PC-3 (cell line): ENCODE measurements at regions of chr2 and their contacts with region 1.

Region 1: DNA sequence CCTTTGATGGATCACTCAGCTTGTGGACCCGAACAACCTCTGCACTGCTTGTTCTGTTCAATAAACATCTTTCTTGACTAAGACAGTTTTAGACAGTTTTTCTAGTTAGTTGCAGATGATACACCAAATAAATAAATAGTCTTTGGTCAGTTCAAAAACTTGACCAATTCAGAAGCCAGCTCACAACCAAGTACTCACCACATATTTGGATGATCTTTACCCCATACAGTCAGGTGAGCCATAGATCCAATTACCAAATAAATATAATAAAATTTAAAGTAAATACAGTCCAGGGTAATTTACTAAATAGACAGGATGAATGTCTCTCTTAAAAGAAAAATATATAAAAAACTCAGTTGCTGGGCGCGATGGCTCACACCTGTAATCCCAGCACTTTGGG is 18.2 kb downstream of the SCN3A start:
- DNase-seq: peak; percentile 52
- ATAC-seq: peak; percentile 95
- H3K4me3 ChIP-seq: no peak overlapping the region
- H3K27ac ChIP-seq: no peak overlapping the region
- H3K4me1 ChIP-seq: no peaks in the 10 kb centered on the region
- H3K27me3 ChIP-seq: peaks cover 15% of the 10 kb centered on the region; the same call in 1 of the 2 replicates
- CTCF ChIP-seq: no peak

Region 2: DNA sequence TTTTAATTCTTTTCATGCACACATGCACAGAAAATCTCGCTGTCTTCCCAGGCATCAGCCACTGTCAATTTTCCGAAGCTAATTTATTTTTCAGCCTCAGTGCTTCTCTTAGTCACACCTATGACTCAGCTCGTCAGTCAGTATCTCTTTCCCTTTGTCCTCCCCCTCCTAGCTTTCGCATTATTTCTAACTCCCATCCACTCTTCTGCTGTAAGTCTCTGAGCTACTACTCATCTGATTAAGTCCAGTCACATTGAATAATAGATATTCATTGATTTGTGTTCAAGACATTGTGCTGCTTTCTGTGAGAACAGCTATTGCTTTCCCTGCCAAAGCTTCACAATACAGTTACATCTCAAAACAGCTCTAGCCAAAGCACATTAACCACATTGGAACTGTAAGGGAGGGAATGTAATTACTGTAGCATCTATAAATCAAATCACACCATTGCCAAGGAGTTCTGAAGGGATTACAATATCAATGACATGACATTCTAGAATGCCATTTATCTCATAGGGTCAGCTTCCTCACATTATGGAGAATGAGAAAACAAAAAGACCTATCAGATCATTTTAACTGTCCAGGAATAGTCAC is 71.2 kb before region 1 on chr2:
- CTCF ChIA-PET with region 1: no interaction called
- POLR2A ChIA-PET with region 1: no interaction called
- intact Hi-C with region 1: no loop called
- DNase-seq: peak; percentile 71
- ATAC-seq: peak; percentile 95
- H3K4me3 ChIP-seq: no peak overlapping the region
- H3K27ac ChIP-seq: no peak overlapping the region
- H3K4me1 ChIP-seq: peaks cover 7% of the 10 kb centered on the region
- H3K27me3 ChIP-seq: no peaks in the 10 kb centered on the region
- CTCF ChIP-seq: no peak

Region 3: DNA sequence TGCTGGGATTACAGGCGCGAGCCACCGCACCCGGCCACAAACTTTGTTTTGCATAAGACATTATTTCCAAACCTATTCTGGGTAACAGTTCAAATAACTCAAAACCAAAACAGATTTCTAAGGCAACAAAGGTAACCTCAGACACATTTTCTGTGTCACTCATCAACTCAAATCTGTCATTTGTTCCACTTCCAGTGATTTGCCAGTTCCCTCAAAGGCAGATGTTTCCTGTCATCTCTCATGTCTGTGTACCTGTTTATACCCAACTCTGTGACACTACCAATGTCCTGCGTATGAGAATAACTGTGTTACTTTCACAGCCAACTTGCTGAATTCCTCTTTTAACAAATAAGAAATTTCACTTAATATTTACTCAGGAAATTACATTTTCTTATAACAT is 36.2 kb before region 1 on chr2:
- CTCF ChIA-PET with region 1: no interaction called
- POLR2A ChIA-PET with region 1: no interaction called
- intact Hi-C with region 1: loop called (anchors 5 kb)
- DNase-seq: no peak
- ATAC-seq: no peak
- H3K4me3 ChIP-seq: no peak overlapping the region
- H3K27ac ChIP-seq: no peak overlapping the region
- H3K4me1 ChIP-seq: no peaks in the 10 kb centered on the region
- H3K27me3 ChIP-seq: 0 out of 2 replicates have a peak, but pooled peaks cover 6% of the 10 kb centered on the region
- CTCF ChIP-seq: no peak

Region 4: DNA sequence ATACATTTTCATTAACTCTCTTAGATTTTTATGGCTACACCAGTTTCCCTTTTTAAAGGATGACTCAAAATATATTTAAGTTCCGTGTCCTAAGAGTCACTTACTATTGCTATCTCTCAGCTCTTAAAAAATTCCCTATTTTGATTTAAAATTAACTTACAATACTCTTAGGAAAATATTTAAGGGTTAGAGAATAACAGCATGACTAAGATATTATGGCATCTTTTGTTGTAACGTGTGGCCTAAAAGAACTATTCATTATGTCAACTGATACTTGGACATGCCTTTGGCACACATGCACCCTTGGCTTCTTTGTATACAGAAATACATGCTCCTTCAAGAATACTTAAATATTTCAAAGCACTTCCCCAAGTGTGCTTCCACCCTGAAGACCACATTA is 24.1 kb before region 1 on chr2:
- CTCF ChIA-PET with region 1: no interaction called
- POLR2A ChIA-PET with region 1: no interaction called
- intact Hi-C with region 1: loop called (anchors 1 kb)
- DNase-seq: peak; percentile 55
- ATAC-seq: peak; percentile 82
- H3K4me3 ChIP-seq: no peak overlapping the region
- H3K27ac ChIP-seq: peak overlapping the region; percentile 60
- H3K4me1 ChIP-seq: peaks cover 3% of the 10 kb centered on the region; the same call in 1 of the 2 replicates
- H3K27me3 ChIP-seq: no peaks in the 10 kb centered on the region
- CTCF ChIP-seq: no peak

Region 5: DNA sequence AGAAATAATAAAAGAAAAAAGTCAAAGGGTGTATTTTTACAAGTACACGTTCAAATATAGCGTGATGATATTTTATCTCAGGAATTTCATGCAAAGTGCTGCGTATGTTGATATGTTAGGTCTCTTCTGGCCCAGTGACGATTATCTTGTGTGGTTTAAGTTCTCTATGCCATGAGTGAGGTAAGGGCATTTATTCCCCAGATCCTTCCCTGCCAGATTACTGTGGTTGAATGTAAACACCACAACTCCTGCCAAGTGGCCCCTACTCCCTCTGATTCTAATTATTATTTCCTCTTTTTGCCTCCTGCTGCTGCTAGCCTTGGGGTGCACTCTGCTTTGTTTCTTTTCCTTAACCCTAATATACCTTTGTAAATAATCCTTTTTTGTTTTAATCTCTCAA is 65.7 kb after region 1 on chr2:
- CTCF ChIA-PET with region 1: no interaction called
- POLR2A ChIA-PET with region 1: no interaction called
- intact Hi-C with region 1: no loop called
- DNase-seq: peak; percentile 34
- ATAC-seq: peak; percentile 56
- H3K4me3 ChIP-seq: no peak overlapping the region
- H3K27ac ChIP-seq: no peak overlapping the region
- H3K4me1 ChIP-seq: no peaks in the 10 kb centered on the region
- H3K27me3 ChIP-seq: no peaks in the 10 kb centered on the region
- CTCF ChIP-seq: no peak

Region 6: GRCh38 chr2:165462443-165462842 is 276.8 kb after region 1 on chr2:
- CTCF ChIA-PET with region 1: no interaction called
- POLR2A ChIA-PET with region 1: no interaction called
- intact Hi-C with region 1: no loop called
- DNase-seq: no peak
- ATAC-seq: no peak
- H3K4me3 ChIP-seq: no peak overlapping the region
- H3K27ac ChIP-seq: no peak overlapping the region
- H3K4me1 ChIP-seq: no peaks in the 10 kb centered on the region
- H3K27me3 ChIP-seq: no peaks in the 10 kb centered on the region
- CTCF ChIP-seq: no peak

Region 7: DNA sequence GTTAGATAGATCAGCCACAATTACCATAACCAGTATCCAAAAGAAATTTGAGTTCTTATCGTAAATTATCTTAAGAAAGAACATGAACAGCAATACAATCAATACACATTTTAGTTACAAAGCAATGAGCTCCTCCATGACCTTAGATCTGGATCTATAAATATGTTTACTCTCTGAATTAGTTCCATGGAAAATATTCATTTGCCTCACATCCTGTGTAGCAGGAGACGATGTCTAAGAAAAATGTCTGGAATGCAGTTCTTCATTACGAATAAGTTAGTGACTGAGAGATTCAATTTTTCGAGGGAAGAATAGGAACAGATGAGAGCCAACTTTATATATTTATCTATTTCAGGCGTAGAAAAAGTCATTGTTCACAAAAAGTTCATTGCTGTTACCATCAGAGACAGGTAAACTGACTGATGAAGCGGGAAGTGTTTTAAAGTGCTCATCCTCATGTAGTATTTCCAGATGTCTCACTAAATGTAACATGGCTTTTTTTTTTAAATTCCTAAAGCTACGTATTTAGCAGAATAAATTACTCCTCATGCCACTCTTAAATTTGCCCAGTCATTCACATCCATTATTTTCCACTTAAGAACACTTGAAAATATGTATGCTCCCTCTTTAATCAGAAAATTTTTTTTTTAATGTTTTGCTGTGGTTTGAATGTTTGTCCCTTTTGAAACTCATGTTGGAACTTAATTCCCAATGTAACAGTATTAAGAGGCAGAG is 1048.6 kb after region 1 on chr2:
- CTCF ChIA-PET with region 1: no interaction called
- POLR2A ChIA-PET with region 1: no interaction called
- intact Hi-C with region 1: no loop called
- DNase-seq: peak; percentile 97
- ATAC-seq: peak; percentile 64
- H3K4me3 ChIP-seq: peak overlapping the region; percentile 14; the same call in 1 of the 2 replicates
- H3K27ac ChIP-seq: peak overlapping the region; percentile 80
- H3K4me1 ChIP-seq: peaks cover 71% of the 10 kb centered on the region
- H3K27me3 ChIP-seq: no peaks in the 10 kb centered on the region
- CTCF ChIP-seq: no peak